AG04450 (cell line): ENCODE measurements at regions of chr10 and their contacts with region 1.

Region 1: DNA sequence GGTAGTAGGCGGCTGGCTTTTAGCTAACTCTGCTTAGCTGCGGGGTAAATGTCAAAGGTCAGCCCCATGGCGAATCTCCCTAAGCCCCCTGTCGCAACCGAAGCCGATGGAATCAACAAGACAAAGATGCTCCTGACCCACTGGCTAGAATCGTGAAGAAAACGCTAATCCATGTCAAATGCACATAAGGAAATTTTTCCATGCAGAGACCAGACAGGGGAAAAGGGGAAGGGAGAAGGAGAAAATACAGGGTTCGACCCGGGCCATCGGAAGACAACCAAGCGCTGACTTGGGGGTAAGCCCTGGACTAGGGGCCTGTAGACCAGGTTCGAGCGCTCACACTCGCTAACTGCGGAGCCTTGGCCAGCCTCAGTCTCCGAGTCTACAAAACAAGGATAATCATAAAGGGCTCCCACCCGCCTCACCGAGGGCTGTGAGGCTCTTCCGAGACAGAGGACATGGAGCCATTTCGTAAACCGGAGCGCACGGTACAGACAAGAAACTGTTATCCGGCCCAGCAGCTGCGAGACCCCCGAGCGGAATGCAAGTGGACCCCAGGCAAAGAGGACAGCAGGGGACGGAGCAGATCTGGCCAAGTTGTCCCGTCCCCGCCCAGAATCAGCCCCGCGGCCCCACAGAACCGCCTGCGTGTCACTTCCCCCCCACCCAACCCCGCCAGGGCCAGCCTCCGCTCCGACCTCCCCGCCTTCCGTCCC is 507 bp downstream of the SAR1A start:
- DNase-seq: no peak
- H3K4me3 ChIP-seq: peak overlapping the region; percentile 99
- H3K27ac ChIP-seq: peak overlapping the region; percentile 85
- H3K27me3 ChIP-seq: no peaks in the 10 kb centered on the region
- CTCF ChIP-seq: no peak

Region 2: GRCh38 chr10:70115948-70116682 is 53.7 kb before region 1 on chr10:
- CTCF ChIA-PET with region 1: no interaction called
- POLR2A ChIA-PET with region 1: no interaction called
- DNase-seq: no peak
- H3K4me3 ChIP-seq: no peak overlapping the region
- H3K27ac ChIP-seq: no peak overlapping the region
- H3K27me3 ChIP-seq: no peaks in the 10 kb centered on the region
- CTCF ChIP-seq: peak; percentile 90

Region 3: DNA sequence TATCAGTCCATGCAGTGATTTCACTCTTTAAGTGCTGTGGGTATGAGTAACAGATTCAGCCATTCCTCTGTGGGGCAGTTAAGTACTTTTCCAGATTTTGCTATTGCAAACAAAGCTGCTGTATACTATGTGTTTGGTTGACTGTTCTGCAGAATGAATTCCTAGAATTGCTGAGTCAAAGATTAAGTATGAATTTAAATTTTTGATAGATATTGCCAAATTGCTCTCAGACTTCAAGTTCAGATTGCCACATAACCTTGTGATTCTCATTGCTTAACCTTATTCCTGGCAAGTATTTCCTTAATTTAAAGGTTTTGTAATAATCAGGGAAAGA is 22.1 kb after region 1 on chr10:
- CTCF ChIA-PET with region 1: no interaction called
- POLR2A ChIA-PET with region 1: interaction called, 46 read pairs
- DNase-seq: peak; percentile 82
- H3K4me3 ChIP-seq: no peak overlapping the region
- H3K27ac ChIP-seq: peak overlapping the region; percentile 87
- H3K27me3 ChIP-seq: no peaks in the 10 kb centered on the region
- CTCF ChIP-seq: no peak